Transverse colon (tissue), 4 donors: ENCODE measurements at regions of chr5 and their contacts with region 1.

Region 1: DNA sequence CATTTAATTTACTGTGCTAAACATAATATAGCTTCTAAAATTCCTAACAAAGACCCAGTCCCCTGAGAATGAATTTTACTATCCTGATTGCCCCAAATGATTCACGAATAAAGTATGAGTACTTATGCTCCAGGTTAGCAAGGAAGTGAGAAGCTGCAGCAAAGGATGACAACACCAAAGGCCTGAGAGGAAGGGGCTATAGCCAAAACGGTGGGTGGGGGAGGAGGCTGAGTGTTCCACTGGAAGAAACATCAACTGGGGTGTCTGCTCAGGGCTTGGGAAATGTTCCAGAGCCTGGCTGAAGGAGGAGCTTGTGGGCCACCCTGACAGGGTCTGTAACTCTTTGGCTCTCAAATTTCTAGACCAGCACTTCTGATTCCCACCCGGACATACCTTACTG is 157.3 kb downstream of the ADAMTS12 start:
- DNase-seq: no peak
- H3K4me3 ChIP-seq: no peak overlapping the region
- H3K27ac ChIP-seq: no peak overlapping the region
- H3K4me1 ChIP-seq: no peaks in the 10 kb centered on the region
- H3K27me3 ChIP-seq: no peaks in the 10 kb centered on the region
- CTCF ChIP-seq: no peak
- EP300 ChIP-seq: no peak
- POLR2A ChIP-seq: no peak

Region 2: GRCh38 chr5:33772380-33772897 is 37.9 kb after region 1 on chr5:
- in situ Hi-C with region 1: no loop called
- intact Hi-C with region 1: no loop called
- DNase-seq: no peak
- H3K4me3 ChIP-seq: no peak overlapping the region
- H3K27ac ChIP-seq: no peak overlapping the region
- H3K4me1 ChIP-seq: peaks cover 0 to 4% (median 0%) of the 10 kb centered on the region in 4 donors
- H3K27me3 ChIP-seq: no peaks in the 10 kb centered on the region
- CTCF ChIP-seq: no peak
- EP300 ChIP-seq: no peak
- POLR2A ChIP-seq: no peak

Region 3: DNA sequence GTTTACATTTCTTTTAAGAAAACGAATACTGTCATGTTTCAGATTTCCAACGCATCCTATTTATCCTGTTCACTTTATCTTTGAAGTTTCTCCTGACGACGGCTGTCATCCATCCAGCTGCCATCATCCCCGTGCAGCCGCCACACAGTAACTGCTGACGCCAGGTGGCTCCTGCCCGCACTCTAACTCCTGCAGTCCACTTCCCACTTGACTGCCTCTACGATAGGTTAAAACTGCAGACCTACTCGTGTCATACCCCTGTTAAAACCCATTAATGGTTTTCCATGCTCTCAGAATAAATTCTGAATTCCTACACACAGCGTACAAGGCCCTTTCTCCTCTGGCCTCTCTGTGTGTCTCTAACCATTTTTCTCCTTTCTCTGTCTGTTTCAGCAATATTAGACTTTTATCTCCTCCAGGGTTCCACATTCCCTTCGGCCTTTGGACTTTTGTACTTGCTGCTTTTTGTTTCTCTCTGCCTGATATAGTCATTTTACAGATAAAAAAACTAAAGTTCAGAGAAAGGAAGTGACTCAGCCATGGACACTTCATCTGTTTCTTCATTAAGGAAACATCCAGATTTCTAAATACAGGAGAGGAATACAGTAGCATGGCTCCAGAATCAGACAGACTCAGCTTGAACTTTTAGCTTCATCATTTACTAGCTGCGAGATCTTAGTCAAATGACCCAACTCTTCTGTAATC is 72.4 kb after region 1 on chr5:
- in situ Hi-C with region 1: no loop called
- intact Hi-C with region 1: loop called (anchors 5 kb)
- DNase-seq: no peak
- H3K4me3 ChIP-seq: no peak overlapping the region
- H3K27ac ChIP-seq: no peak overlapping the region
- H3K4me1 ChIP-seq: no peaks in the 10 kb centered on the region
- H3K27me3 ChIP-seq: no peaks in the 10 kb centered on the region
- CTCF ChIP-seq: no peak
- EP300 ChIP-seq: no peak
- POLR2A ChIP-seq: no peak